ENCODE measurements at regions of chr2 and their contacts with region 1.

Region 1: DNA sequence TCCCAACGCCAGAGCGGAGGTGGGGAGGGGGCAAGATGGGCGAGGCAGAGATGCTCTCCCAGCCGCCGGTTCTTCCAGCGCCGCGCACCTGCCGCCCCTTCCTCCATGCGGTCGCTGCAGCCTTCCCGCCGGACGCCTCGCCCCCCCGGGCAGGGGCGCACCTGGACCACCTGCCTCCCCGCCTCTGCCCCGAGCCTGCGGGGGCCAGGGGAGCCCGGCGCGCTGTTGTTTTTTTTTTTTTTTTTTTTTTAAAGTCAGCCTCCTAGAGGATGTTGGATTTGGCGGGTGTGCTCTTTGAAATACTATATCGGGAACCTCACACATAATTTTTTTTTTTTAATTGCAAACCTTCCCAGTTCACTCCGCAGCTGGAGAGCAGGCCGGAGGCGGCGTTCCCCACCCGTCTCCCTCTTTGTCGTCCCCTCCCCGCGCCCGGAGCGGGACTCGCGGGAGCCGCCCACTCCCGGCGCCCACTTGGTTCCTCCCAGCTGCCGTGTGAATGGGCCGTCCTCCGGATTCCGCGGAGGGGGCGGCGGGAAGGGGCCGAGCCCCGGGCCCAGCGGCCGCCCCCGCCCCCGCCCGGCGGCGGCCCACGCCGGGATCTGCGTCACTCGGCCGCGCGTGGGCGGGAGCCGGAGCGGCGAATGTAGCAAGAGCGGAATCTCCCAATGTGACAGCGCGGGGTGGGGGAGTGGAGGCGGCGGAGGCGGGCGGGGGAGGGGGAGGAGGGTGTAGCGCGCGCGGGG is 421 bp upstream of the NAB1 start:
- DNase-seq: peak; percentile 96
- H3K4me3 ChIP-seq: peak overlapping the region; percentile 42 to 98 (median 89)
- H3K27ac ChIP-seq: peak overlapping the region; percentile 93 to 96 (median 96)
- H3K4me1 ChIP-seq: peaks cover 0 to 49% (median 28%) of the 10 kb centered on the region in 4 donors
- H3K27me3 ChIP-seq: no peaks in the 10 kb centered on the region
- CTCF ChIP-seq: no peak
- EP300 ChIP-seq: no peak
- POLR2A ChIP-seq: peak; percentile 20 to 36

Region 2: GRCh38 chr2:189783927-189784867 is 864.3 kb before region 1 on chr2 and contains the starts of genes ORMDL1 and PMS1:
- intact Hi-C with region 1: loop called (anchors 10 kb)
- DNase-seq: peak; percentile 97
- H3K4me3 ChIP-seq: peak within 1 kb of the TSS; percentile 64 to 85 (median 75)
- H3K27ac ChIP-seq: peak within 1 kb of the TSS; percentile 88 to 98 (median 94)
- H3K4me1 ChIP-seq: peaks cover 0 to 35% (median 32%) of the 10 kb centered on the region in 4 donors
- H3K27me3 ChIP-seq: no peaks in the 10 kb centered on the region
- CTCF ChIP-seq: no peak
- EP300 ChIP-seq: no peak
- POLR2A ChIP-seq: peak; percentile 74 to 75
- total RNA-seq, gene ORMDL1: 56.3 to 83.9 (median 64.0) TPM
- total RNA-seq, gene PMS1: 15.1 to 17.7 (median 17.5) TPM

Region 3: GRCh38 chr2:190408538-190409271 is 239.8 kb before region 1 on chr2:
- intact Hi-C with region 1: loop called (anchors 5 kb)
- DNase-seq: peak; percentile 73
- H3K4me3 ChIP-seq: peak overlapping the region; percentile 75 to 98 (median 82)
- H3K27ac ChIP-seq: peak overlapping the region; percentile 79 to 88 (median 80)
- H3K4me1 ChIP-seq: peaks cover 0 to 26% (median 17%) of the 10 kb centered on the region in 4 donors
- H3K27me3 ChIP-seq: no peaks in the 10 kb centered on the region
- CTCF ChIP-seq: no peak
- EP300 ChIP-seq: no peak
- POLR2A ChIP-seq: peak in 1 of 2 donors; percentile 16

Region 4: DNA sequence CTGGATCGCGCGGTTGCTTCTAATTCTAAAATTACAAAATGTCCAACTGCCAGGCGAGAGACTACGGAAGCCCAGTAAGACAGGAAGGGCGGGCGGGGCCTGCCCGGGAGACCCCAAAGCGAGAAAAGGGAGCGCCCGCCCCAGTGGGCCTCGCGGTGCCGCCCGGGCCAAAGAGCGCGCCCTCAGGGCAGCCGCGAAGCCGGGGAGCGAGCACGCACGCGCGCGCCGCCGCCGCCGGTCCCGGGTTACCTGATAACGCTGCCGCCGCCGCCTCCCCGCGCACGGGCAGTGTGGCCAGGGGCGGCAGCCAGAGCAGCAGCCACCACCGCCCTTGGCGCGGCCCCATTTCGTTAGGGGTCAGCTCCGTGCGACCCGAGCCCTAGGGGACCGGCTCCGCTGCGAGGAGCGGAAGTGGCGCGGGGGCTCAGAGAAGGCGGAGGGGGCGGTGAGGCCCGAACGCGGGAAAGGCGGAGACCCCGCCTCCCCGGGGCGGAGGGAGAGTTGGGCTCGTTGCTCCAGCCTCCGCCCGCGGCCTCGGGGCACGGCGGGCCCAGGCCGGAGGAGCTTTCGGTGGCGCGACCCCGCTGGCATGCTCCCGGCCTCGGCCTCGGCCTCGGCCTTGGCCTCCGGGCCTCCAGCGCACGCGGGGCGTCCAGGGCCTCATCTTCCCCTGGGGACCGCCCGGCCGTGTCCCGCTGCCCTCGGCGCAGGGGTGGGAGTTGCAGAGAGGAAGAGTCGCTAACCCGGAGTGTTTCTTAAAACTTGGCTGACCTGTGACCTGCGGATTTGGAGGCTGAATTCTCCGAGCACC is 113.9 kb before region 1 on chr2 and contains the start of gene NEMP2:
- intact Hi-C with region 1: loop called (anchors 2 kb)
- DNase-seq: peak; percentile 83
- H3K4me3 ChIP-seq: peak within 1 kb of the TSS; percentile 69 to 81 (median 76)
- H3K27ac ChIP-seq: peak within 1 kb of the TSS; percentile 94 to 97 (median 96)
- H3K4me1 ChIP-seq: peaks cover 0 to 23% (median 9%) of the 10 kb centered on the region in 4 donors
- H3K27me3 ChIP-seq: no peaks in the 10 kb centered on the region
- CTCF ChIP-seq: peak in 1 of 4 experiments; percentile 5
- EP300 ChIP-seq: no peak
- POLR2A ChIP-seq: peak in 1 of 2 donors; percentile 34
- total RNA-seq, gene NEMP2: 3.1 to 6.8 (median 4.7) TPM

Region 5: DNA sequence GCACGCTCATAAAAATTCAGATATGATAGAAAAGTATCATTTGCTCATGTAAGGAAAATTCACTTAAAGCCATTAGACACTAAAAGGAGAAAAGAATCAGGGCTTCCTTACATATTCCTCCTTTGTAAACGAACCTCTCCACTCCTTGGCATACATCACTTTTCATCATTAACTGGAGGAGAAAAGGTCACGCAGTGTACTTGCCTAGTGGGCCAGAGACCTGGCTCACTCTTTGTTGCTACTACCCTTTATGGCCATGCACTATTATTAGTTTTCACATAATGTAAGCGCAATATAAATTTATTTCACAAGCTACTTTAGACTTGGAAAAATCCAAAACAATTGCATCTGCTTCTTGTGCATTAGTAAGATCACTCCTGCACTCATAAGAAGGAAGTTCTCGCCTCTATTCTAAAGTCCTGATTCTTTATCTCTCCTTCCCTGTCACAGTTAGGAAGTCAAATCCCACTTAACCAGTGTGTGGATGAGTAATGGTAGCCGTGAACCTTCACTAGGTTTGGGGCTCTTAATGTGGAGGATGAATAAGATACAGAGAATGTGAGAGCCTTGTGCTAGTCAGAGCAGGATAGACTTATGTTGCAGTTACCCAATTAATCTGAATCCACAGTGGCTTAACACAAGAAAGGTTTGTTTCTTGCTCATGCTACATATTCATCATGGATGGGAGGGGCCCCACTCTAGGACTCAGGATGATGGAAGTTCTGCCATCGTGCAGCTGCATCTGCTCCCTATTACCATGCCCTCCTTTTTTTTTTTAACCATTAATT is 117.1 kb after region 1 on chr2:
- intact Hi-C with region 1: loop called (anchors 5 kb)
- DNase-seq: no peak
- H3K4me3 ChIP-seq: no peak overlapping the region
- H3K27ac ChIP-seq: peak overlapping the region in 3 of 4 donors; percentile 30 to 50 (median 43)
- H3K4me1 ChIP-seq: peaks cover 0 to 26% (median 19%) of the 10 kb centered on the region in 4 donors
- H3K27me3 ChIP-seq: no peaks in the 10 kb centered on the region
- CTCF ChIP-seq: no peak
- EP300 ChIP-seq: no peak
- POLR2A ChIP-seq: no peak

Region 6: DNA sequence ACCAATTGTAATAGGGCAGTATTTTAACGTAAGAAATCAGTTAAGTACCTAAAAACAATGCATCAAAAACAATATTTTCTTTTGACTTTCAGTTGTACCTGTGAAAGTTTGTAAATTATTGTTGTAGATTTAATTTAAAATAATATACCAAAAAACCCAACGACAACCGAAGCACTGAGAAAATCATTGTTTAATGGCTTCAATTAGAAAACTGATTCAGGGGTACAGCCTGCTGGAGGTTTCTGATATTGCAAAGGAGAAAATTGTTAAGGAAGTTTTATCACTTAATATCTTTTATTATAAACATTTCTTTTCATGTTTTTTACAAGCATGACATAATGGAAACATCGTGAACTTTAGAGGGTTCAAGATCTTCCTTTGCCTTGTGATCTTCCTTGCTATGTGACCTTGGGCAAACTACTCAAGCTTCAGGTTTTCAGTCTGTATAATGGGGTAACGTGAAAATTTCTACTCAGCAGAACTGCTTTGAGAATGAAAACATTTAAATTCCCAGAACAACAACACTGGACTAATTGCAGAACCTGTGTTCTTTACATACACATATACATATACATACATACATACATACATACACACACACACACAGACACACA is 155.8 kb after region 1 on chr2:
- intact Hi-C with region 1: no loop called
- DNase-seq: no peak
- H3K4me3 ChIP-seq: no peak overlapping the region
- H3K27ac ChIP-seq: no peak overlapping the region
- H3K4me1 ChIP-seq: peaks cover 0 to 3% (median 0%) of the 10 kb centered on the region in 4 donors
- H3K27me3 ChIP-seq: no peaks in the 10 kb centered on the region
- CTCF ChIP-seq: peak; percentile 30 to 63 (median 54)
- EP300 ChIP-seq: no peak
- POLR2A ChIP-seq: no peak

Region 7: GRCh38 chr2:191013932-191014652 is 365.6 kb after region 1 on chr2 and contains the start of gene STAT1:
- intact Hi-C with region 1: loop called (anchors 10 kb)
- DNase-seq: peak; percentile 96
- H3K4me3 ChIP-seq: peak within 1 kb of the TSS; percentile 75 to 94 (median 84)
- H3K27ac ChIP-seq: peak within 1 kb of the TSS; percentile 92 to 96 (median 94)
- H3K4me1 ChIP-seq: peaks cover 0 to 35% (median 25%) of the 10 kb centered on the region in 4 donors
- H3K27me3 ChIP-seq: no peaks in the 10 kb centered on the region
- CTCF ChIP-seq: peak in 1 of 4 experiments; percentile 10
- EP300 ChIP-seq: peak in 2 of 4 donors; percentile 72 to 77
- POLR2A ChIP-seq: peak; percentile 87
- total RNA-seq, gene STAT1: 47.4 to 78.5 (median 55.8) TPM

Measured in sigmoid colon (tissue), 7 donors.